Left ventricle myocardium superior (tissue), 1 donor: ENCODE measurements at regions of chr4 and their contacts with region 1.

Region 1: DNA sequence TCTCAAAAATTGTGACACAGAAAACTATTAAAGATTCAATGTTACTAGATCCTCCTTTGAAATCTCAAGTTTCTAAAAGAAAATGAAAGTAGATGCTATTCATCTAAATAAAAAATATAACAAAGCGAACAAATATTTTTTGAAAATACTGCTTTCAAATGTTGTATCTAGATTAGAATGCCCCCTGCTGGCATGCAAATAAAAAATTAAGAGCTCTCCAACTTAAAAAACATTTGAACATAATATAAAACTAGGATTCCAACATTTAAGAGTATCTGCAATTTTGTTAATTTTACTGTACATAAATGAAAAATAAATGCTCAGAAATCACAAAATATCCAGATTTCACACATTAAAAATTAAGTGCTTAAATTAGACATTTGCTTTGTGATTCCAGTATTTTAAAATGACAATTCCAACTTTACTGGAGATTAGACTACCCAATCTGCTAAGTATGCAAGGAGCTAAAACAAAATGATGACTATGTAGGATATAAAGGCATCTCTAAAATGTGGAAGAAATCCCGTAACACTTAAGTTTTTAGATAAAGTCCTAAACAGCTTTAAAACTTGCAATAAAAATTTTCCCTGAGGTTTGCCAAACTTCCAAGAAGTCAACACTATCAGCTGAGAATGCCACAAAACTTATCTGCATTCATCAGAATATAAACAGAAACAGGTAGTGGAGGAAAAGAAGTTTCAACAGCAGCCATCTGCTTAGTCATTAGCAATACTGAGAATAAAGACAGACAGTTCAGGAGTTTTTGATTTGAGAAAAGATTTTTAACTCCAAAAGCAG is 32.7 kb downstream of the DHX15 start:
- DNase-seq: no peak
- ATAC-seq: no peak

Region 2: DNA sequence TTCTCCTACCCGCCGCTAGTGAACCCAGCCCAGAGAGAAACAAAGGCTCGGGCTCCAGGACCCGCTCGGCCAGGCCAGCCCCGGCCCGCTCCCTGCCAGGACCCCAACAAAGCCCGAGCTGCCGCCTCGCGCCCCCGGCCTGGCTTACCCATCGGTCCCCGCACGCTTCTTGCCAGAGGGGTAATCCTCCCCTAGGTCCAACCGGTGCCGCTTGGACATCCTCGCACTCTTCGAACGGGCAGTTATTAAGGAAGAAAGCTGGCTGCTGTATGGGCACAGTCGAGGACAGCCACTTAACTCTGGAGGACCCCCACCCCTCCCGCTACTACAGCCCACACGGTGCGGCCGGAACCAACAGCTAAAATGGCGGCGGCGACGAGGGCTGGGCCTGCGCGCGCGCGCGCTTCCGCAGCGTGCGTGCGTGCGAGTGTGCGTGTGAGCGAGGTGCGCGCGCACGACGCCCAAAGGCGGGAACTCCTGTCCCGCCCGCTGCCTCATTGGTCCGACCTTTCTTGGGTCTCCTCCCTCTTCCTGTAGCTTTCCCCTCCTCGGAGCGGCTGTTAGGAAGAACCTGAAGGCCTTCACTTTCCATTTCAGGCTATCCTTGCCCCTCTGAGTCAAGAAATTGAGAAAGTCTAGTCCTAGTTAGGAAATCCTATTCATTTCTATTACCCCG is 32.6 kb after region 1 on chr4 and contains the start of gene DHX15:
- intact Hi-C with region 1: loop called (anchors 2 kb)
- DNase-seq: peak; percentile 98
- ATAC-seq: peak; percentile 96
- total RNA-seq, gene DHX15: 53.0 TPM

Region 3: DNA sequence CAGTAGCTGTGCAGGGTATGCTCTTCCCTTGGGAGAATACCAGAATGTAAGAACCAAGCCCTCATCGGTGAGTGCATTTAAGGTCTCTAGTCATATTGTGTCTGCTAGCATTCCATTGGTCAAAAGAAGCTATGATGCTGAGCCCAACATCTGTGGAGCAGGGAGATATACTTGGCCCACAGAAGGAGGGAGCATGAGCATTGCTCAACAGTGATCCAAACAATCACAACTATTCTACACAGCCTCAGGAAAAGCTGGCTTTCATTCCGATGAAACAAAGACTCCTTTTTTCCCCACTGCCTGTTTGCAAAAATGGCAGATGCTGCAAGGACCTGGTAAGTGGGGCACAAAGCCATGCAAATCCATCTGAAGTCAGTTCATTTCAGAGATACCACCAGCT is 113.3 kb after region 1 on chr4:
- intact Hi-C with region 1: no loop called
- DNase-seq: no peak
- ATAC-seq: peak; percentile 96